Body of pancreas (tissue), 4 donors: ENCODE measurements at regions of chr5 and their contacts with region 1.

Region 1: DNA sequence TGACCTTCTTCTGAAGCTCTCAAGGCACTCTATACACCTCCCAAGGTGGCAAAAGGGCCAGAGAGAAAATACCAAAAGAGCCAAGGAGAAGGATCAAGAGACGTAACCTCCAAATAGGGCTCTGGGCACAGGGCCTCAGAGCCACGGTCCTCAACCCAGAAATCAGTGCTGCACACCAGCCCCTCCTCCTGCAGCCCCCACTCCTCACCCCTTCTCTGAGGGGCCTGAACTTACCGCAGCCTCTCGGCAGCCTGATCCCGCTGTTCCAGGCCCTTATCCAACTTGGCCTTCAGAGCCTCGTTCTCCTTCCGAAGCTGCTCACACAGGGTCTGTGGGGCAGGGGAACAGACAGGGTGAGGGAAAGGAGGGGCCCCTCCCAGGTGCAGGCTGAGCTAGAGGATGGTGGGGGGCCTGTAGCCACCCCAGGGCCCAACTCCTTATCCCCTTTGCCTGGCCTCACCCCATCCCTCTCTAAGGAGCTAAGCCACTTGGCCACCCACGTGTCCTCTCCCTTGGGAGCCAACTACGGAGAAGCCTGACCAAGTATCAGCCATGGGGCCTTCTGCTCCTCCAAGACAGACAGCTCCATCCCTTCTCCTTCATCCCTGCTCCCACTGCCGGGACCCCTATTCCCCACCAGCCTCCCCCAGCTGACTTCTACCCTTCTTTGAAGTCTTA is 28.8 kb downstream of the TNIP1 start:
- DNase-seq: no peak
- ATAC-seq: no peak
- H3K4me3 ChIP-seq: no peak overlapping the region
- H3K27ac ChIP-seq: no peak overlapping the region
- H3K4me1 ChIP-seq: peaks cover 16% of the 10 kb centered on the region
- H3K27me3 ChIP-seq: no peaks in the 10 kb centered on the region
- CTCF ChIP-seq: peak in 1 of 7 experiments; percentile 4
- POLR2A ChIP-seq: no peak

Region 2: DNA sequence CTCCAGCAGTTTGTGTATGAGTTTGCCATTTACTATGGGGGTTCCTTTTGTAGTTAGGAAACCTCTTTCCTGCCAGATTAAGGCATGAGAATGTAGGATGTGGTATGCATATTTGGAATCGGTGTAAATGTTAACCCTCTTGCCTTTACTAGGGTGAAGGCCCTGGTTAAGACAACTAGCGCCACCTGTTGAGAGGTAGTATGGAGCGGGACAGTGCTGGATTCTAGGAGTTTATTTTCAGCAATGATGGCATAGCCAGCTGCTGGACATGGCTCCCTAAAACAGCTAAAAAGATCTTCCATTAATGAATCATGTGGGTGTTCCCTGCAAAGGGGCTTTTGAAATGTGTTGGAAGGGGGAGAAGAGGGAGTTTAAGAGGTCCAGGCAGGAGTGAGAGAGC is 62.4 kb before region 1 on chr5:
- intact Hi-C with region 1: no loop called
- DNase-seq: no peak
- ATAC-seq: no peak
- H3K4me3 ChIP-seq: no peak overlapping the region
- H3K27ac ChIP-seq: no peak overlapping the region
- H3K4me1 ChIP-seq: no peaks in the 10 kb centered on the region
- H3K27me3 ChIP-seq: no peaks in the 10 kb centered on the region
- CTCF ChIP-seq: no peak
- POLR2A ChIP-seq: no peak

Region 3: GRCh38 chr5:151115274-151115905 is 63.3 kb after region 1 on chr5:
- intact Hi-C with region 1: loop called (anchors 2 kb)
- DNase-seq: peak; percentile 81 to 87 (median 82)
- ATAC-seq: peak; percentile 86
- H3K4me3 ChIP-seq: no peak overlapping the region
- H3K27ac ChIP-seq: no peak overlapping the region
- H3K4me1 ChIP-seq: no peaks in the 10 kb centered on the region
- H3K27me3 ChIP-seq: no peaks in the 10 kb centered on the region
- CTCF ChIP-seq: peak; percentile 86 to 98 (median 94)
- POLR2A ChIP-seq: no peak